Transverse colon (tissue), 4 donors: ENCODE measurements at regions of chr1 and their contacts with region 1.

Region 1: DNA sequence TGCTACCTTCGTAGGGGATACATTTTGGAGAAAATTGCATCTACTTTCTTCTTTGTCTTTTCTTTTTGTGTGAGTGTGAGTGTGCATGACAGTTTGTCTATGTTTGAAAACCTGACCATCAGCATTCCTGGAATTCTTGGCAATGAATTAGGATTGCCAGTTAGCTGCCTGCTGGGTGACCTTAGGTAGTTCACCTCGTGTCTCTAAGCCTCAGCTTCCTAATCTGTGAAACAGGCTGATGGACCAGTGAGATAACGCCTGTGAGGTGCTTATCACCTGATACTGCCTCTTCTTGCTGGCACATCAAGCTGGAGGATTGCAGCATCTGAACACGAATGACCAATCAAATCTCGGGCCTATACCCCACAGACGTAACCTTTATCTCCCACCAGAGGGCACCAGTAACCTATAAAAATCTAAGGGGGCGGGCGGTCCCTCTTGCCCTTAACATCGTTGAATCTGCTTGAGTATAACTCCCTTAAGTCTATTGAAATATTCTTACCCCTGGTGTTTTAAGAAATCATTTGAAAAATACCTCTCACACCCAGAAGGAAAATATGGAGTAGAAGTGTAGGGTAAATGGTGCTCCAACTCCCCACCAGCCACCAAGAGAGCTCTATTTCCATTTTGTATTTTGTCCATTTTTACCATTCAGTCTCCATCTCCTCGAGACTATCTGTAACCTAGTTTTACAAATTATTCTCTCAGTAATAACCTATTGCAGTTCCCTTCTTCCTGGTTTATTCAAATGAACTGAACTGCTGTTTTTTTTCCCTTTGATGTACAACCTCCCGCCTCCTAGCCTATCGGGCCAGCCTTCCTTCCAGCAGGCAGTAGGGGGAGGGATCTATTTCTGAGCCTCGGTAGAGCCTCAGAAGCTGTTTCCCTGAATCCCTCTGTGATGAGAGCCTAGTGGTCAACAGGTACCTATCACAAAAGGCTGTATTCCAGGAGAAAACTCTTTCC is 49.7 kb downstream of the MDM4 start:
- DNase-seq: peak; percentile 49
- H3K4me3 ChIP-seq: no peak overlapping the region
- H3K27ac ChIP-seq: peak overlapping the region in 1 of 4 donors; percentile 13
- H3K4me1 ChIP-seq: peaks cover 0 to 3% (median 0%) of the 10 kb centered on the region in 4 donors
- H3K27me3 ChIP-seq: no peaks in the 10 kb centered on the region
- CTCF ChIP-seq: peak; percentile 61 to 78 (median 65)
- EP300 ChIP-seq: no peak
- POLR2A ChIP-seq: no peak

Region 2: GRCh38 chr1:204763706-204764427 is 198.0 kb after region 1 on chr1:
- in situ Hi-C with region 1: loop called (anchors 10 to 25 kb)
- intact Hi-C with region 1: loop called (anchors 5 kb)
- DNase-seq: peak; percentile 78
- H3K4me3 ChIP-seq: no peak overlapping the region
- H3K27ac ChIP-seq: no peak overlapping the region
- H3K4me1 ChIP-seq: peaks cover 0 to 12% (median 2%) of the 10 kb centered on the region in 4 donors
- H3K27me3 ChIP-seq: peaks cover 32% of the 10 kb centered on the region
- CTCF ChIP-seq: peak; percentile 80 to 89 (median 86)
- EP300 ChIP-seq: no peak
- POLR2A ChIP-seq: no peak

Region 3: GRCh38 chr1:204769997-204770396 is 204.1 kb after region 1 on chr1:
- in situ Hi-C with region 1: loop called (anchors 10 to 25 kb)
- intact Hi-C with region 1: loop called (anchors 5 kb)
- DNase-seq: no peak
- H3K4me3 ChIP-seq: no peak overlapping the region
- H3K27ac ChIP-seq: no peak overlapping the region
- H3K4me1 ChIP-seq: no peaks in the 10 kb centered on the region
- H3K27me3 ChIP-seq: peaks cover 54% of the 10 kb centered on the region
- CTCF ChIP-seq: no peak
- EP300 ChIP-seq: no peak
- POLR2A ChIP-seq: no peak

Region 4: GRCh38 chr1:204806943-204807687 is 241.2 kb after region 1 on chr1:
- in situ Hi-C with region 1: loop called in 1 of 4 experiments (anchors 10 kb)
- intact Hi-C with region 1: loop called (anchors 2 kb)
- DNase-seq: peak; percentile 86
- H3K4me3 ChIP-seq: peak overlapping the region; percentile 14 to 52 (median 28)
- H3K27ac ChIP-seq: peak overlapping the region in 1 of 4 donors; percentile 52
- H3K4me1 ChIP-seq: peaks cover 0 to 26% (median 7%) of the 10 kb centered on the region in 4 donors
- H3K27me3 ChIP-seq: no peaks in the 10 kb centered on the region
- CTCF ChIP-seq: peak; percentile 96 to 99 (median 98)
- EP300 ChIP-seq: no peak
- POLR2A ChIP-seq: no peak

Region 5: DNA sequence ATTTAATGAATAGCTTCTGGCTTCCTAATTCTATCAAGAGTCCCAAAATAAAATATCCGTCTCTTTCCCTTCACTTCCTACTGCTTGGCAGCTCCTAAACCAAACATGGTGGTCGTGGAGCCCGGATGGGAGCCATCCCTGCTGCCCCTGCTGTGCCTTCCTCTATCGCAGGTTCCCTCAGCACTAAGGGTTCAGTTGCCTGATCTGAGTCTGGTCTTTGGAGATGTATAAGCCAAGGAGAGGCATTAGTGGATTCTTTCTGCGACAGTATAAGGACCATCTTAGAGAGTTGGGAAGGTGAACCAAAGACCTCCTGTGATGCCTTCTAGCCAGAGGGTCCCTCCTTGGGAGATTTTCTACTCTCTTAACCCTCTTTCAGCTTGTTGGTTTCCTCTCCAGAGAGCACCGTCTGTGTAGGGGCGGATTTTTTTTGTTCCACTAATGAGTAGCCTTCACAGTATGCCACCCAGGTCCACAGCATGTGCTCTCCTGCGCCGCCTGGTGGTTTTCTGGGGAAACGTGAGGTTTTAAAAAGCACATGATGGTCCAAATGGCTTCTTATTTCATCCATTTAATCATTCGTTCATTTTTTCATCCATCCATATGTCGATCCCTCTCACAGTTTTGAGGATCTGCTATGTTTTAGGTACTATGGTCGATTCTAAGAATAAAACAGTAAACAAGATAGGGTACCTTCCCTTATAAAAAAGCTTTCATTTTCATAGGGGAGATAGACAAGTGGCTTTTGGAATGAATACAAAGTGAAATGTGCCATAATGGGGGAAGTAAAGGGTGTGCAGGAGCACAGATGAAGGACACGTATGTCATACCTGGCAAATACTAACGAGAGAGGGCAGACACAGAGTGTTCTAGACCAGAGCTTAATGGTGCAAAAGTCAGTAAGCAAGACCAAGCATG is 375.8 kb after region 1 on chr1:
- in situ Hi-C with region 1: loop called in 2 of 4 experiments (anchors 25 kb)
- intact Hi-C with region 1: no loop called
- DNase-seq: peak; percentile 73
- H3K4me3 ChIP-seq: no peak overlapping the region
- H3K27ac ChIP-seq: no peak overlapping the region
- H3K4me1 ChIP-seq: peaks cover 0 to 4% (median 0%) of the 10 kb centered on the region in 4 donors
- H3K27me3 ChIP-seq: no peaks in the 10 kb centered on the region
- CTCF ChIP-seq: peak; percentile 89 to 96 (median 91)
- EP300 ChIP-seq: no peak
- POLR2A ChIP-seq: no peak

Region 6: GRCh38 chr1:205028924-205029323 is 463.0 kb after region 1 on chr1:
- in situ Hi-C with region 1: no loop called
- intact Hi-C with region 1: no loop called
- DNase-seq: no peak
- H3K4me3 ChIP-seq: no peak overlapping the region
- H3K27ac ChIP-seq: no peak overlapping the region
- H3K4me1 ChIP-seq: no peaks in the 10 kb centered on the region
- H3K27me3 ChIP-seq: peaks cover 16% of the 10 kb centered on the region
- CTCF ChIP-seq: no peak
- EP300 ChIP-seq: no peak
- POLR2A ChIP-seq: no peak